ENCODE measurements at regions of chr7 and their contacts with region 1.

Region 1: DNA sequence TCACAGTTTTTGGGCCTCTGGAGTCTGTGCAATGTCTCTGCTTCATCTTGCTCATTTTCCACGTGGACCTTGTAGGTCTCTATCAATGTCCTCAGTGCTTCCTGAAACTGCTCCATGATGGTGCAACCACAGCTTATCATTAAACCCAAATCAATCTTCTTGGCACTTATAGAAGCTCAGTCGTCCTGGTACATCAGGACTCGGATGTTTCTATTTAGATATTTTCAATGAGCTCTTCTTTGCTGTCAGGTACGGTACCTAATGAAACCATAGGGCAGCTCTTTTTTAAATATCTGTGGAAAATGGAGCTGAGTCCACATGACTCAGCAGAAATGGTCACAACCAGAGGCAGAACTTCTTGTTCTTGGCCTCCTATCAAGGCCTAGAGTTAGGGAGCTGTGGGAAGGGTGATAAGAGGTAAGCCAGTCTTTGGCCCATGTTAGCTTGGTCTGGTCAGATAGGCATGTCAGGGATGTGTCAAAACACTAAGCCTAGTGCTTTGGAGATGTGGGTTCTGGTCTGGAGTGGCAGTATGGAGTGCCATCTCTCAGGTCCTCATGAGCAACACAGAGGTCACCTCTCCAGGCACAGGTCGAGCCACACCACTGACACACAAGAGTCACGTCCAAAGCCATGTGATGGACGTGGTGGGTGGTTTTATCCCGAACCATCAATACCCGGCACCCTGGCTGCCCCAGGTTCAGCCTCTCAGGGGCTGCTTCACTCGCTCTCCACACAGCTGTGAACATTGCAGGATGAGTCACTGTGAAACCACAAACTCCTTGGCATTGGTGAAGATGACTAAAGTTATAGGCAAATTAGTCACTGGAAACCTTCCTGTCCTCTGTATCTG is 87.0 kb downstream of the TBXAS1 start:
- DNase-seq: peak; percentile 65
- H3K4me3 Mint-ChIP-seq: no peak overlapping the region
- H3K27ac Mint-ChIP-seq: peak overlapping the region; percentile 74
- H3K4me1 Mint-ChIP-seq: peaks cover 29% of the 10 kb centered on the region
- H3K27me3 Mint-ChIP-seq: peaks cover 2% of the 10 kb centered on the region

Region 2: GRCh38 chr7:139645572-139646523 is 270.2 kb before region 1 on chr7:
- intact Hi-C with region 1: loop called (anchors 2 kb)
- DNase-seq: peak; percentile 68
- H3K4me3 Mint-ChIP-seq: no peak overlapping the region
- H3K27ac Mint-ChIP-seq: no peak overlapping the region
- H3K4me1 Mint-ChIP-seq: peaks cover 65% of the 10 kb centered on the region
- H3K27me3 Mint-ChIP-seq: peaks cover 1% of the 10 kb centered on the region

Region 3: GRCh38 chr7:139829025-139829774 is 86.9 kb before region 1 on chr7 and contains the start of gene TBXAS1:
- intact Hi-C with region 1: loop called (anchors 1 kb)
- DNase-seq: no peak
- H3K4me3 Mint-ChIP-seq: peak within 1 kb of the TSS; percentile 63
- H3K27ac Mint-ChIP-seq: peak within 1 kb of the TSS; percentile 86
- H3K4me1 Mint-ChIP-seq: peaks cover 37% of the 10 kb centered on the region
- H3K27me3 Mint-ChIP-seq: peaks cover 16% of the 10 kb centered on the region
- total RNA-seq, gene TBXAS1: 2.4 and 3.1 TPM in 2 replicates

Region 4: GRCh38 chr7:139942636-139943035 is 26.5 kb after region 1 on chr7:
- intact Hi-C with region 1: loop called (anchors 1 kb)
- DNase-seq: no peak
- H3K4me3 Mint-ChIP-seq: no peak overlapping the region
- H3K27ac Mint-ChIP-seq: no peak overlapping the region
- H3K4me1 Mint-ChIP-seq: peaks cover 15% of the 10 kb centered on the region
- H3K27me3 Mint-ChIP-seq: peaks cover 13% of the 10 kb centered on the region

Region 5: DNA sequence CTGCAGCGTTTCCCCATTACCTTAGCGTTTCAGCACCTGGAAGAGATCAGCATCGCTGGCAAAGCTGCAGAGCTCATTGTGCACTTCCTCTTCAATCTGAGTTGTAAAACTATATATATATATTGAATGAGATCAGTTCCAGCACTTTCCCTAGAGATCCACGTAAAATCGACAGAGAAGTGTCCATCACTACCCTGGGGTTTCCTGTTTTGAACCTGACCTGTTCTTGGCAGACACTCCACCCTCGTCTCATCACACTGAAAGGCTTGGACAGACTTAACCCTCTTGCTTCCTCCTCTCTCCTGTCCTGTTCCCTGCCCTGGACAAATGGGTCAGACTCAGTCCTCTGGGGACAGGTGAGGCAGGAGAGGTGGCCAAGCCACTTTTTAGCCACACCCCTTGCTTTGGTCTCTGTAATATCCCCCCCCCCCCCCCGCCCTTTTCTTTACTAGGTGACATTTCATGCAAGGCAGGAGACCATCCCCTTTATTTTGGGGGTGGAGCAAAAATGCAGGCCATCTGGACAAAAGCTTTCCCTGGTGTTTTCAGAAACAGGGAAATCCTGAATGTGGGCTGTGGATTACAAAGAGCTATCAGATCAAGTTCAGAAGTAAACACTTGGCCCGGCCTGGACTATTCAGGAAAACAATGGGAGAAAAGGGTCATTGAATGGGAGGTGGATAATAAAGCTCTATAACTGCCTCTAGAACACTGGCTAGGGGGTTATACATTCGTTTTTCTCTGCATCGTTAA is 344.4 kb after region 1 on chr7:
- intact Hi-C with region 1: loop called (anchors 10 kb)
- DNase-seq: no peak
- H3K4me3 Mint-ChIP-seq: no peak overlapping the region
- H3K27ac Mint-ChIP-seq: no peak overlapping the region
- H3K4me1 Mint-ChIP-seq: peaks cover 42% of the 10 kb centered on the region
- H3K27me3 Mint-ChIP-seq: no peaks in the 10 kb centered on the region